ENCODE measurements at regions of chr12 and their contacts with region 1.

Region 1: GRCh38 chr12:6323340-6323994 is 13.0 kb downstream of the PLEKHG6 start:
- H3K4me3 Mint-ChIP-seq: peak overlapping the region; percentile 13
- H3K27ac Mint-ChIP-seq: peak overlapping the region; percentile 91
- H3K4me1 Mint-ChIP-seq: peaks cover 65% of the 10 kb centered on the region
- H3K27me3 Mint-ChIP-seq: peaks cover 19% of the 10 kb centered on the region

Region 2: GRCh38 chr12:5996459-5996858 is 327.0 kb before region 1 on chr12:
- intact Hi-C with region 1: no loop called
- H3K4me3 Mint-ChIP-seq: no peak overlapping the region
- H3K27ac Mint-ChIP-seq: no peak overlapping the region
- H3K4me1 Mint-ChIP-seq: no peaks in the 10 kb centered on the region
- H3K27me3 Mint-ChIP-seq: peaks cover 5% of the 10 kb centered on the region

Region 3: GRCh38 chr12:6241495-6241894 is 82.0 kb before region 1 on chr12:
- intact Hi-C with region 1: no loop called
- H3K4me3 Mint-ChIP-seq: no peak overlapping the region
- H3K27ac Mint-ChIP-seq: no peak overlapping the region
- H3K4me1 Mint-ChIP-seq: no peaks in the 10 kb centered on the region
- H3K27me3 Mint-ChIP-seq: peaks cover 6% of the 10 kb centered on the region

Region 4: DNA sequence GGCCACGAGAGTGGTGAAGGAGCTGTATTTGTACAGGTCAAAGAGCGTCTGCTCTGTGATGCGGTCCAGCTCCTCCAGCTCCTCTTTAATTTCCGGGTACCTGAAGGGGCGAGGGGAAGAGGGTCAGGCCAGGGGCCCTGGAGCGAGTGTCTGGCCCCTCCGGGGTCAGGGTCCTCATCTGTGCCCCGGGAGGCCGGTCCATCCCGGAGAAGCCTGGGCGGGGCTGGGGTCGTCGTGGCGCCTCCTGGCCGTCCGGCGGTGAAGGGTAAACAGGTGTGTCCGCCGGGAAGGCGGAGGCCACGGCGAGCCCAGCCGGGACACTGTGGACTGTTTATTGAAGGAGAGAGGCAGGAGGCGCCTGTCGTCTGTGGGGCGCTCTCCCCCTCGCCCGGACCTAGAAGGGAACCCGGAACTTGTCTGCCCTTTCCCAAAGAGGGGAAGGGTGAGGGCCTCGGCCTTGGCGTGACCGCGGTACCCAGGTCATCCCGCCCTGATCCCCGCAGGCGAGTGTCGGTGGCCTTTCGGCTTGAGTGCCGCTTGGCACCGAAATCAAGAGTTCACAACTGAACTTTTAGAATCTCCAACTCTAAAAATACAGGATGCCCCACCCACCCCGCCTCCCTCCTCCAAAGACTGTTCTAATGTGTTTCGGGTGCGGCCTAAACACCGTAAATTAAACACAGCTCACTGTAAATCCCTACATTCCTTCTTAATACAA is 40.3 kb after region 1 on chr12:
- intact Hi-C with region 1: loop called (anchors 5 kb)
- H3K4me3 Mint-ChIP-seq: peak overlapping the region; percentile 79
- H3K27ac Mint-ChIP-seq: peak overlapping the region; percentile 87
- H3K4me1 Mint-ChIP-seq: peaks cover 59% of the 10 kb centered on the region
- H3K27me3 Mint-ChIP-seq: no peaks in the 10 kb centered on the region